Right ventricle myocardium superior (tissue), 1 donor: ENCODE measurements at regions of chr1 and their contacts with region 1.

Region 1: DNA sequence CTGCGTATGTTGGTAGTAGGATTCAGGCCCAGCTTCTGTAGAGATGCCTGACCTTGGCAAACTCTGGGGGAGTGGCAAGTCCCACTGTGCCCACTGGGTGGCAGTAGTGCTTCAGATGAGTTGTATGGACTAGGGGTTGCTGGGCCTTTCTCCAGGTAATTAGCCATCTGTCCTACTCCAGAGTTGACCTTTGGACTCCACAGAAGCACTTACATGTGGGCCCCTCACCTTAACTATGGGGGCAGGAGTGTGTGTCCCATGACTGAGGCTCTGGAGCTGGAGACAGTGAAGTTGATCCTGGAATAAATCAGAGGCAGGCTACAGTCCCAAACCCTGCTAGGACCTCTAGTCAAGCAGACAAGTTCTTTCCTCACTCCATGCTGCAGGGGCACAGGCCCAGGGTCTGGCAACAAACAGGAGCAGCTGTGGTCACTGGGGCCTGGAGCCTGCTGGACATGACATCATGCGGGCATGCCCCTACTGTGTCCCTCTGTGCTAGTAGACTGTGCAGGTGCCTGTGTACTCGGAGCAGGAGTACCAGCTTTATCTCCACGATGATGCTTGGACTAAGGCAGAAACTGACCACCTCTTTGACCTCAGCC is 4.6 kb downstream of the DMAP1 start:
- DNase-seq: peak; percentile 84
- ATAC-seq: peak; percentile 65

Region 2: DNA sequence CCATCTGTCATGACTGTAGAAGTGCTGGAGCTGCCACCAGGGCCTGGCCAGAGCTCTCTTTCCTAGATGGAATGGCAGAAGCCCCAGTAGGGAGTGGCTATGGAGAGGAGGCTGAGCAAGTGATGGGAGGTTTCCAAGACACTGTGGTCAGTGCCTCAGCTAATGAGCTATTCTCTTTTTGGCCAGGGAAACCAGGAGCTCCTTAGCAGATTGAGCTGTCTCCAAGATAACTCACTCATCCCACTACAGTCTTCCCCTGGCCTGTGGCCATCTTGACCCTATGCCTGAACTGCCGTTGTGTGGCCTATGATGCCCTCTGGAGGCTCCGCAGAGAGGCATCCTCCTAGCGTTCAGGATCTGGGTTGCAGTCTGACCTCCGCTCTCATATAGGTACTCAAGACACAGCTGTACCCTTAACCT is 76.7 kb after region 1 on chr1:
- intact Hi-C with region 1: no loop called
- DNase-seq: peak; percentile 53
- ATAC-seq: peak; percentile 17

Region 3: GRCh38 chr1:44318097-44319088 is 100.5 kb after region 1 on chr1:
- intact Hi-C with region 1: loop called (anchors 5 kb)
- DNase-seq: no peak
- ATAC-seq: no peak

Region 4: DNA sequence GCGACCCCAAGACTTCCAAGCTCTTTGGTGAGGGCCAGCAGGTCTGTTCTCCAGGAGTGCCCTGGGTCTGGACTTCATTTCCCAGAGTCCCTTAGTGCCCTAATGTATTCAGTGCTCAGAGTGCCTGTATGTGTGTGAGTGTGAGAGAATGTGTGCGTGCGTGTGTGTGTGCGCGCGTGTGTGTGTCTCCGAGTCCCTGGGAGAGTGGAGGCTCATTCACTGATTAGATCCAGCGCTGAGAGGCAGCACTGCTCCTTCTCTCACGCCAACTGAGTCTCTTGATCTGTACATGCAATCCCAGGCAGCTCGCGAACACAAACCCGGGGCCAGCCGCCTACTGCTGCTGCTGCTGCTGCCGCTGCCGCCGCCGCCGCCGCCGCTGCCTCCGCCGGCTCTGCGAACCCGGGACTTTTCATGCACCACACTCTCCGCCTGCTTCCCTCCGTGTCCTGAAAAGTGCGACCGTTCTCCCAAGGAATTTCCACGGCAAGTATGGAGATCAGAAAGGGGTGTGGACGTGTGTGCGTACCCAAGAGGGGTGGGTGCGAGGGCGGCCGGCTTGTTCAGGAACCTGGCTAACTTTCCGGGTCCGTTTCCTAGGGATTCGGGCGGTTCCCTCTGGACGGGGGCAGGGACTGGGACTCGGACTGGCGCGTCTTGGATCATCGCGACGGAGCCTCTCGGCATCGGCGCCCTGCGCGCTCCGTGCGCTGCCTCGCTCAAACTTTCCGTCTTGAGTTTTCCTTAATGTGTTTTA is 187.3 kb after region 1 on chr1 and contains the start of gene RNF220:
- intact Hi-C with region 1: no loop called
- DNase-seq: peak; percentile 68
- ATAC-seq: peak; percentile 83
- total RNA-seq, gene RNF220: 72.5 TPM

Region 5: GRCh38 chr1:44594871-44595746 is 377.2 kb after region 1 on chr1:
- intact Hi-C with region 1: loop called (anchors 5 kb)
- DNase-seq: peak; percentile 90
- ATAC-seq: peak; percentile 97